AG04450 (cell line): ENCODE measurements at regions of chr5 and their contacts with region 1.

Region 1: GRCh38 chr5:169980418-169981053 is at the start of gene INSYN2B:
- DNase-seq: peak; percentile 71
- H3K4me3 ChIP-seq: peak within 1 kb of the TSS; percentile 76
- H3K27ac ChIP-seq: peak within 1 kb of the TSS; percentile 57
- H3K27me3 ChIP-seq: no peaks in the 10 kb centered on the region
- CTCF ChIP-seq: peak; percentile 66
- polyA plus RNA-seq, gene INSYN2B: 6.1 and 6.8 TPM in 2 replicates

Region 2: GRCh38 chr5:169591636-169592035 is 388.9 kb before region 1 on chr5:
- CTCF ChIA-PET with region 1: interaction called, 32 read pairs
- POLR2A ChIA-PET with region 1: no interaction called
- DNase-seq: peak; percentile 46
- H3K4me3 ChIP-seq: no peak overlapping the region
- H3K27ac ChIP-seq: no peak overlapping the region
- H3K27me3 ChIP-seq: no peaks in the 10 kb centered on the region
- CTCF ChIP-seq: no peak

Region 3: GRCh38 chr5:169701910-169702451 is 278.6 kb before region 1 on chr5:
- CTCF ChIA-PET with region 1: interaction called, 11 read pairs
- POLR2A ChIA-PET with region 1: interaction called, 4 read pairs
- DNase-seq: no peak
- H3K4me3 ChIP-seq: no peak overlapping the region
- H3K27ac ChIP-seq: no peak overlapping the region
- H3K27me3 ChIP-seq: no peaks in the 10 kb centered on the region
- CTCF ChIP-seq: peak; percentile 67

Region 4: GRCh38 chr5:169753795-169754194 is 226.7 kb before region 1 on chr5:
- CTCF ChIA-PET with region 1: interaction called, 16 read pairs
- POLR2A ChIA-PET with region 1: no interaction called
- DNase-seq: no peak
- H3K4me3 ChIP-seq: no peak overlapping the region
- H3K27ac ChIP-seq: no peak overlapping the region
- H3K27me3 ChIP-seq: no peaks in the 10 kb centered on the region
- CTCF ChIP-seq: no peak

Region 5: GRCh38 chr5:169850409-169850808 is 130.1 kb before region 1 on chr5:
- CTCF ChIA-PET with region 1: interaction called, 12 read pairs
- POLR2A ChIA-PET with region 1: interaction called, 8 read pairs
- DNase-seq: no peak
- H3K4me3 ChIP-seq: no peak overlapping the region
- H3K27ac ChIP-seq: no peak overlapping the region
- H3K27me3 ChIP-seq: no peaks in the 10 kb centered on the region
- CTCF ChIP-seq: peak; percentile 34

Region 6: GRCh38 chr5:169906745-169907649 is 73.5 kb before region 1 on chr5:
- CTCF ChIA-PET with region 1: interaction called, 15 read pairs
- POLR2A ChIA-PET with region 1: no interaction called
- DNase-seq: no peak
- H3K4me3 ChIP-seq: no peak overlapping the region
- H3K27ac ChIP-seq: peak overlapping the region; percentile 39
- H3K27me3 ChIP-seq: no peaks in the 10 kb centered on the region
- CTCF ChIP-seq: no peak

Region 7: GRCh38 chr5:169956756-169957155 is 23.8 kb before region 1 on chr5:
- CTCF ChIA-PET with region 1: interaction called, 14 read pairs
- POLR2A ChIA-PET with region 1: no interaction called
- DNase-seq: no peak
- H3K4me3 ChIP-seq: no peak overlapping the region
- H3K27ac ChIP-seq: no peak overlapping the region
- H3K27me3 ChIP-seq: no peaks in the 10 kb centered on the region
- CTCF ChIP-seq: no peak

Region 8: GRCh38 chr5:170597109-170597751 is 616.7 kb after region 1 on chr5:
- CTCF ChIA-PET with region 1: no interaction called
- POLR2A ChIA-PET with region 1: no interaction called
- DNase-seq: no peak
- H3K4me3 ChIP-seq: no peak overlapping the region
- H3K27ac ChIP-seq: no peak overlapping the region
- H3K27me3 ChIP-seq: peaks cover 4% of the 10 kb centered on the region
- CTCF ChIP-seq: no peak